Left colon (tissue), 2 donors: ENCODE measurements at regions of chr7 and their contacts with region 1.

Region 1: GRCh38 chr7:134690016-134690415 is 43.4 kb downstream of the BPGM start:
- DNase-seq: no peak
- ATAC-seq: no peak

Region 2: GRCh38 chr7:133912916-133913697 is 776.9 kb before region 1 on chr7:
- intact Hi-C with region 1: no loop called
- DNase-seq: no peak
- ATAC-seq: no peak

Region 3: DNA sequence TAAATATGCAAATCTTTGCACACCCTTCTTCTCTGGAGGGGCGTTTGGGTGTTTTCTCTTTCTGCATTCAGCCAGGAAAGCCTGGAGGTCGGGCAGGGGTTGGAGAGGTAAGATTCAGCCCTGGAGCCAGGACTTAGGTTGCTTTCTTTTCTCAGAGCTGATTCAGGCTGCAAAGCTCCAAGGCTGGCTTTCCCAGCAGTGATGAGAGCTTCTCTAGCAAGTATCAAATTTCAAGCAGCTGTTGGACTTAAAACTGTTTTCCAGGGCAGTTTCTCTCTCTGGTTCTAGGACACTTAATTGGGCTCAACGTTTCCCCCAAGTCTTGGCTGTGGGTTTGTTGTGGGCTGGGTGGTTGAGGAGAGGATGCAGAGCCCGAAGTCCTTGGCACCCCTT is 162.0 kb before region 1 on chr7:
- intact Hi-C with region 1: no loop called
- DNase-seq: no peak
- ATAC-seq: no peak

Region 4: GRCh38 chr7:134750083-134751062 is 60.4 kb after region 1 on chr7:
- intact Hi-C with region 1: loop called in 1 of 2 experiments (anchors 5 kb)
- DNase-seq: peak in 1 of 2 donors; percentile 59
- ATAC-seq: peak; percentile 56